Gastrocnemius medialis (tissue), 4 donors: ENCODE measurements at regions of chrX and their contacts with region 1.

Region 1: GRCh38 chrX:48597353-48598264 is at the start of gene WDR13:
- DNase-seq: peak; percentile 82 to 90
- ATAC-seq: peak; percentile 92 to 97
- H3K4me3 ChIP-seq: peak within 1 kb of the TSS; percentile 75 to 85 (median 84)
- H3K27ac ChIP-seq: peak within 1 kb of the TSS; percentile 89 to 99 (median 96)
- H3K4me1 ChIP-seq: peaks cover 3 to 4% of the 10 kb centered on the region in 2 donors
- H3K27me3 ChIP-seq: no peaks in the 10 kb centered on the region
- CTCF ChIP-seq: no peak
- POLR2A ChIP-seq: peak; percentile 56 to 61
- total RNA-seq, gene WDR13: 82.7 to 143 (median 133) TPM

Region 2: GRCh38 chrX:48574270-48575266 is 23.0 kb before region 1 on chrX and contains the start of gene RBM3:
- in situ Hi-C with region 1: no loop called
- intact Hi-C with region 1: loop called (anchors 1 kb)
- DNase-seq: peak; percentile 90 to 91
- ATAC-seq: peak; percentile 97 to 98
- H3K4me3 ChIP-seq: peak within 1 kb of the TSS; percentile 64 to 89 (median 81)
- H3K27ac ChIP-seq: peak within 1 kb of the TSS; percentile 94 to 99 (median 98)
- H3K4me1 ChIP-seq: peaks cover 11 to 14% of the 10 kb centered on the region in 2 donors
- H3K27me3 ChIP-seq: no peaks in the 10 kb centered on the region
- CTCF ChIP-seq: peak in 4 of 5 experiments; percentile 31 to 42 (median 34)
- POLR2A ChIP-seq: peak; percentile 84 to 88
- total RNA-seq, gene RBM3: 49.2 to 92.1 (median 59.9) TPM

Region 3: GRCh38 chrX:48676106-48676892 is 78.7 kb after region 1 on chrX:
- in situ Hi-C with region 1: no loop called
- intact Hi-C with region 1: loop called (anchors 10 kb)
- DNase-seq: peak; percentile 84 to 90
- ATAC-seq: peak; percentile 94 to 98
- H3K4me3 ChIP-seq: peak overlapping the region; percentile 67 to 77 (median 72)
- H3K27ac ChIP-seq: peak overlapping the region; percentile 86 to 95 (median 90)
- H3K4me1 ChIP-seq: no peaks in the 10 kb centered on the region
- H3K27me3 ChIP-seq: no peaks in the 10 kb centered on the region
- CTCF ChIP-seq: no peak
- POLR2A ChIP-seq: peak; percentile 53 to 68

Region 4: DNA sequence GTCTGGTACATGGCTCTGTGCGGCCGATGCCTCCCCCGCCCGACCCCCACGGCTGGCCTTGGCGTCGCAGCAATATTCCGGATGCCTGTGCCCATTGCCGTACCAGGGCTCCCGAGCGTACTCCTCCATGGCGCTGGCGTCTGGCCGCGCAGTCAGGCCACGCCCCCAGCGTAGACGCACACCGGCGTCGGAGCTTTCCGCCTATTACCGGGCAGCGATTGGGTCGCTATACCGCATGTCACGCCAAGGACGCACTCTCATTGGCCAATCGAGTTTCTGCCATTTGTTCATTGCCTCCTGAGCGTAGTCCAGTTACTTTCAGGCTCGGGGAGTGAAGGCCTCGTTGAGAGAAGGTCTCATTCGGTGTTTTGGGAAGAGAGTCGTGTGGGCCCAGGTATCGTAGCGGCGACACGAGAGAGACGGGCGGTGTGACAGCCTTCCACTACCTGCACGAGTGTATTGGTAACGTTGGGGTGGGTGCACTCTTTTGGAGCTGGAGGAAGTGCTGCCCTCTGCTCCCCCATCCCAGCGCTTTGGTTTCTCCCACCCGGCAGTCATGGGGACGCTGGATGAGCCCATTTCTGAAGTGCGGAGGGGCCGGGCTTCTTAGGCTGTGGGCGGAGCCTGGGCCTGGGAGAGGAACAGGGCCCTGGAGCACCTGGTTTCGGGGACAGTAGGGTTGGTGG is 300.2 kb after region 1 on chrX and contains the starts of genes PQBP1 and TIMM17B:
- in situ Hi-C with region 1: no loop called
- intact Hi-C with region 1: loop called (anchors 5 kb)
- DNase-seq: peak; percentile 87 to 92
- ATAC-seq: peak; percentile 95 to 97
- H3K4me3 ChIP-seq: peak within 1 kb of the TSS; percentile 62 to 79 (median 72)
- H3K27ac ChIP-seq: peak within 1 kb of the TSS; percentile 90 to 98 (median 95)
- H3K4me1 ChIP-seq: peaks cover 0 to 12% of the 10 kb centered on the region in 2 donors
- H3K27me3 ChIP-seq: no peaks in the 10 kb centered on the region
- CTCF ChIP-seq: no peak
- POLR2A ChIP-seq: peak; percentile 76 to 88
- total RNA-seq, gene PQBP1: 61.3 to 90.4 (median 67.8) TPM
- total RNA-seq, gene TIMM17B: 53.3 to 103 (median 68.5) TPM

Region 5: GRCh38 chrX:49269010-49269767 is 671.6 kb after region 1 on chrX:
- in situ Hi-C with region 1: no loop called
- intact Hi-C with region 1: loop called (anchors 5 kb)
- DNase-seq: peak; percentile 96 to 98
- ATAC-seq: peak; percentile 89 to 95
- H3K4me3 ChIP-seq: peak overlapping the region; percentile 57 to 69 (median 60)
- H3K27ac ChIP-seq: peak overlapping the region; percentile 77 to 93 (median 92)
- H3K4me1 ChIP-seq: peaks cover 9 to 10% of the 10 kb centered on the region in 2 donors
- H3K27me3 ChIP-seq: no peaks in the 10 kb centered on the region
- CTCF ChIP-seq: no peak
- POLR2A ChIP-seq: peak in 1 of 2 donors; percentile 35